AG04449 (cell line): ENCODE measurements at regions of chr6 and their contacts with region 1.

Region 1: GRCh38 chr6:3457467-3458333 is 850 bp upstream of the SLC22A23 start:
- DNase-seq: no peak
- H3K4me3 ChIP-seq: peak overlapping the region; percentile 61
- CTCF ChIP-seq: no peak

Region 2: GRCh38 chr6:3176562-3177355 is 280.9 kb before region 1 on chr6:
- CTCF ChIA-PET with region 1: no interaction called
- POLR2A ChIA-PET with region 1: no interaction called
- DNase-seq: peak; percentile 53
- H3K4me3 ChIP-seq: no peak overlapping the region
- CTCF ChIP-seq: no peak

Region 3: GRCh38 chr6:3442431-3443220 is 15.1 kb before region 1 on chr6:
- CTCF ChIA-PET with region 1: interaction called, 16 read pairs
- POLR2A ChIA-PET with region 1: no interaction called
- DNase-seq: peak; percentile 21
- H3K4me3 ChIP-seq: no peak overlapping the region
- CTCF ChIP-seq: no peak

Region 4: DNA sequence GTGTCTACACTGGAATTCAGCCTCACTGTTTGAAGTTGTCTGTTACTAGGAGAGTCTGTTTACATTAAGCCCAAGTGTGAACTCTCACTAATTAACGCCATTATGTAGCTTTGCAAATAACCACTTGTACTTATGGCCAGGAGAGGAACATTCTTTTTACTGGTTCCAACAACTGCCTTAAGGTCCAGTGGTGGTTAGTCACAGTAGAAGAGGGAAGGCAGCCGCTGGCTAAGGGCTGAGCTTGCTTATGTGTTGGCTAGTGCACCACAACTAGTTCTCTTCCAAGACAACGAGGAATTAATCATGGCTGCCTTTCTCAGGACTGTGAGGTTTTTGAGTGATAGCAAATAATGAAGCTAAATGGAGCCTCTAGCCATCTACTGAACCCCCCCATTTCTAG is 14.0 kb after region 1 on chr6:
- CTCF ChIA-PET with region 1: interaction called, 31 read pairs
- POLR2A ChIA-PET with region 1: no interaction called
- DNase-seq: no peak
- H3K4me3 ChIP-seq: no peak overlapping the region
- CTCF ChIP-seq: no peak